ENCODE measurements at regions of chr3 and their contacts with region 1.

Region 1: GRCh38 chr3:48439820-48440589 is at the starts of genes CCDC51 and TMA7:
- DNase-seq: peak; percentile 98
- H3K4me3 Mint-ChIP-seq: peak within 1 kb of the TSS; percentile 88
- H3K27ac Mint-ChIP-seq: peak within 1 kb of the TSS; percentile 77
- H3K4me1 Mint-ChIP-seq: peaks cover 18% of the 10 kb centered on the region
- H3K27me3 Mint-ChIP-seq: no peaks in the 10 kb centered on the region
- CTCF ChIP-seq: no peak
- total RNA-seq, gene CCDC51: 31.9 and 32.5 TPM in 2 replicates
- total RNA-seq, gene TMA7: 356 and 372 TPM in 2 replicates

Region 2: DNA sequence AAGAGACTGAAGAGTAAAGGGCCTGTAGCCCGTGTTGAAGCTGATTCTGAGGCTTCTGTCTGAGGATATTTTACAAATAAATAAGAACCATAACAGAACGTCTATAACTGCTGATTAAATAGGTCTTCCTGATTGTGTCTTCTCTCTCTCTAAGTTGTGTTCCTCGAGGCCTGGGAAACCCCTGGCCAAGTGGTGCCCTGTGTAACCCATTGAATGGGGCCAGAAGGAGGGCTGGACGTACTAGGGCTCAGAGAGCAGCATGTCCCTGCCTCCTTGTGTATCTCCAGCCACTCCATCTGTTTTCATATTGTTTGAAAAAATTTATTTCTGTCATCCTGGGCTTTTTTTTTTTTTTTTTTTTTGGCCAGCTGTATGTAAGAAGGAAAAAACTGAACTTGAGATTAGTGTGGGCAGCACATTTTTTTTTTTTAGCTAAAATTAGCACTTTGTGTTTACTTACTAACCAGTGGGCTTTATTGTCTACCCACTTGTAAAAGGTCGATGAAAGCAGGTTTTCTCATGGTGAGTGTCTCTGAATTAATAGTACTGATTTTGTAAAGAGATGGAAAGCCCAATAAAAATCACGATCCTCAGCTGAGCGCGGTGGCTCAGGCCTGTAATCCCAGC is 626.3 kb before region 1 on chr3:
- CTCF ChIA-PET with region 1: no interaction called
- POLR2A ChIA-PET with region 1: no interaction called
- intact Hi-C with region 1: no loop called
- DNase-seq: no peak
- H3K4me3 Mint-ChIP-seq: no peak overlapping the region
- H3K27ac Mint-ChIP-seq: no peak overlapping the region
- H3K4me1 Mint-ChIP-seq: no peaks in the 10 kb centered on the region
- H3K27me3 Mint-ChIP-seq: no peaks in the 10 kb centered on the region
- CTCF ChIP-seq: no peak

Region 3: DNA sequence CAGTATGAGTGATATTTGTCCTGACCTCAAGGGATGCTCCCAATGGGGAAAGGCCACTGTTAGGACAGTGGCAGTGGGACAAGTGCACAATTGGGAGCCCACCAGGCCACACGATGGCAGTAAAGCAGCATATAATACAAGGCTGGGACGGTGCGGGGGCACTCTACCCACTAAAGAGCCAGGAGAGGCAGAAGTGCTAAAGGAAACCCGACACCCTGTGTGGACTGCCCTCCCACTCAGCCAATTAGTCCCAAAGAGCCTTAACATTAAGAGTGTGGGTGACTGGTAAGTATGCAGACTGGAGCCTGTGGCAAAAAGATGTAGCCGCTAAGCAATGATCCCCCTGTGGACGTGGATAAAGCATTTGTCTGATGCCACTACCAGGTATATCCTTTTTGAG is 207.3 kb before region 1 on chr3:
- CTCF ChIA-PET with region 1: interaction called, 11 read pairs
- POLR2A ChIA-PET with region 1: interaction called, 6 read pairs
- intact Hi-C with region 1: loop called (anchors 1 kb)
- DNase-seq: peak; percentile 87
- H3K4me3 Mint-ChIP-seq: peak overlapping the region; percentile 29
- H3K27ac Mint-ChIP-seq: no peak overlapping the region
- H3K4me1 Mint-ChIP-seq: peaks cover 11% of the 10 kb centered on the region
- H3K27me3 Mint-ChIP-seq: no peaks in the 10 kb centered on the region
- CTCF ChIP-seq: peak; percentile 65

Region 4: GRCh38 chr3:48273594-48274211 is 166.3 kb before region 1 on chr3:
- CTCF ChIA-PET with region 1: interaction called, 182 read pairs
- POLR2A ChIA-PET with region 1: interaction called, 73 read pairs
- intact Hi-C with region 1: loop called (anchors 1 kb)
- DNase-seq: peak; percentile 74
- H3K4me3 Mint-ChIP-seq: no peak overlapping the region
- H3K27ac Mint-ChIP-seq: no peak overlapping the region
- H3K4me1 Mint-ChIP-seq: peaks cover 17% of the 10 kb centered on the region
- H3K27me3 Mint-ChIP-seq: no peaks in the 10 kb centered on the region
- CTCF ChIP-seq: peak; percentile 85

Region 5: GRCh38 chr3:48318783-48319468 is 121.1 kb before region 1 on chr3:
- CTCF ChIA-PET with region 1: interaction called, 10 read pairs
- POLR2A ChIA-PET with region 1: interaction called, 4 read pairs
- intact Hi-C with region 1: no loop called
- DNase-seq: no peak
- H3K4me3 Mint-ChIP-seq: no peak overlapping the region
- H3K27ac Mint-ChIP-seq: no peak overlapping the region
- H3K4me1 Mint-ChIP-seq: no peaks in the 10 kb centered on the region
- H3K27me3 Mint-ChIP-seq: peaks cover 11% of the 10 kb centered on the region
- CTCF ChIP-seq: no peak

Region 6: DNA sequence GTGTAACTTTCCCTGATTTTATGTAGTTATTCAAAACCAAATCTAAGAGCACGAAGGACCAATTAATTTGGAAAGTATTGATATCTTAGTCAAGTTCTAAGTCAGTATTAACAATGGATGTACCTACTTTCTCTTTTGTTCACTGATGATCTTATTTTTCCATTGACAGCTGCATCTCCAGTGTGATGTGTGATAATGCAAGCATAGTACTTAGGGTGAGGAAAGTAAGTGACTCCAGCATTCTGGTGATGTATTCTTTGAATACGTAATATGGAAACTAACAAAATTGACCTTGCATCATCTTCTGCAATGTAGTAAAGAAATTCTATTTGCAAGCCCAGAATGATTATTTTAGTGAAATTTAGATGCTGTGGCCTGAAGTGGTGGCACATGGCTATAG is 45.6 kb before region 1 on chr3:
- CTCF ChIA-PET with region 1: interaction called, 647 read pairs
- POLR2A ChIA-PET with region 1: interaction called, 749 read pairs
- intact Hi-C with region 1: no loop called
- DNase-seq: no peak
- H3K4me3 Mint-ChIP-seq: no peak overlapping the region
- H3K27ac Mint-ChIP-seq: no peak overlapping the region
- H3K4me1 Mint-ChIP-seq: peaks cover 7% of the 10 kb centered on the region
- H3K27me3 Mint-ChIP-seq: no peaks in the 10 kb centered on the region
- CTCF ChIP-seq: no peak

Region 7: DNA sequence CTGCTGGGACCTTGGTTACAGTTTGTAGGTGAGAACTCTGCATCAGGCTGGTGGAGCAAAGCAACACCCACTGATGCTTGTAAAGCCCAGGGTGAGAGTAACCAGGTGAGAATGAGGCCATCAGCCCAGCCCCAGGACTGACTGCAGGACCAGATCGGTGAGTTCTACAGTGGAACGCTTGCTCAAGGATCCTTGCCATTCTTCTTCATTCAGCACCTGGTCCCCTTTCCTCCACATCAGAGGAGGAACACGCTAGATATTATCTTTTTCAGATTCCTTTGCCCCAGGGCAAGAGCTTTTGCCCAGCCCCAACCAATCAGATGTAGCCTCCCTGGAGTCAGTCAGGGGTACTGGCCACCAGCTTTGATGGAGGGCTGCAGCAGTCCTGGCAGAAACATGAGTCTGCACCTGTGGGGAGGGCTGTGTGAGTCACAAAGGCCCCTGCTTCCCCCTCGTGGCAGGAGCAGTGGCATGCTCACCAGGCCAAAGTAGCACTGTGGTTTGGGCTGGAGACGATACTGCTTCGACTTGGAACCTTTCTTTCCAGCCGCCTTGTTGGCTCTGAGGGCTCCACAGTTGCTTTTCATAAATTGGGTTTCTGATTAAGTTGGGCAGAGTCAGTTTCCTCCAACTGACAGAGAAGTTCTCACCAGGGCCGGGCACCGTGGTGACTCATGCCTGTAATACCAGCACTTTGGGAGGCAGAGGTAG is 67.5 kb after region 1 on chr3:
- CTCF ChIA-PET with region 1: interaction called, 12 read pairs
- POLR2A ChIA-PET with region 1: interaction called, 11 read pairs
- intact Hi-C with region 1: no loop called
- DNase-seq: peak; percentile 84
- H3K4me3 Mint-ChIP-seq: peak overlapping the region; percentile 35
- H3K27ac Mint-ChIP-seq: peak overlapping the region; percentile 59
- H3K4me1 Mint-ChIP-seq: peaks cover 14% of the 10 kb centered on the region
- H3K27me3 Mint-ChIP-seq: no peaks in the 10 kb centered on the region
- CTCF ChIP-seq: peak; percentile 36

Region 8: DNA sequence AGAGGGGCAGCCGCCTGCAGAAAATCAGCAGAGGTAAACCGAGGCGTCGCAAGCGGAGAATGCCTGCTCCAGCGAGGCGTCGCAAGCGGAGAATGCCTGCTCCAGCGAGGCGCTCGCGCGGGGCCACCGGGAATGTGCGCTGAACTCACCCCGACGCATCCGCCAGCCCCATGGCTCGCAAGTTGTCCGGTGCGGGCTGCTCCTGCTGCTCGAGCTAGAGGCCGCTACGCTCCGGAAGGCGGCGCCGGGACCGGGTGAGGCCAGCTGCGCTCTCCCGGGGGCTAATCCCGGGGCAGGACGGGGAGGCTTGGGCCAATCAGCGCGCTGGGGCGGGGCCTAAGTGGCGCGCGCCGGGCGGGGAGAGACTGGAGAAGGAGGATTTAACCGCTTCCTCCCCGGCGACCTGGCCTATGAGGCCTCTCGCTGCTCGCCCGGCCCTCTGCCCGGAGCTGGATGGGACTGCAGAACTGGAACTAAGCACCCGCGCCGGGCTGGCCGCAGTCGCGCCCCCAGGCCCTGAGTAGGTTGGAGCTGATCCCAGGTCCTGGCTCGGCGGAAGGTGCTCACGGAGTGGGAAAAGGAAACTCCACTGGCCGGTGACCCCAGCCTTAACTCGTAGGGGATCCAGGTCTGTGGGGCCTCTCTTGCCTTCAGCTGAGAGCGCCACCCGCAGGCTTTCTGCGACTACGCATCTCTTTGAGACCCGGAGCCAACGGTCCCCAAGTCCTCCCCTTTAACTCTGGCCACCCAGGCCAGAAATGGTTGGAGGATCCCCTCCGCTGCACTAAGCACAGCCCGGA is 195.4 kb after region 1 on chr3 and contains the start of gene SLC26A6:
- CTCF ChIA-PET with region 1: interaction called, 3 read pairs
- POLR2A ChIA-PET with region 1: interaction called, 12 read pairs
- intact Hi-C with region 1: no loop called
- DNase-seq: peak; percentile 98
- H3K4me3 Mint-ChIP-seq: peak within 1 kb of the TSS; percentile 84
- H3K27ac Mint-ChIP-seq: peak within 1 kb of the TSS; percentile 85
- H3K4me1 Mint-ChIP-seq: peaks cover 10% of the 10 kb centered on the region
- H3K27me3 Mint-ChIP-seq: no peaks in the 10 kb centered on the region
- CTCF ChIP-seq: peak; percentile 48
- total RNA-seq, gene SLC26A6: 47.4 and 63.3 TPM in 2 replicates

Measured in MCF 10A (cell line).